PC-9 (cell line): ENCODE measurements at regions of chrX and their contacts with region 1.

Region 1: DNA sequence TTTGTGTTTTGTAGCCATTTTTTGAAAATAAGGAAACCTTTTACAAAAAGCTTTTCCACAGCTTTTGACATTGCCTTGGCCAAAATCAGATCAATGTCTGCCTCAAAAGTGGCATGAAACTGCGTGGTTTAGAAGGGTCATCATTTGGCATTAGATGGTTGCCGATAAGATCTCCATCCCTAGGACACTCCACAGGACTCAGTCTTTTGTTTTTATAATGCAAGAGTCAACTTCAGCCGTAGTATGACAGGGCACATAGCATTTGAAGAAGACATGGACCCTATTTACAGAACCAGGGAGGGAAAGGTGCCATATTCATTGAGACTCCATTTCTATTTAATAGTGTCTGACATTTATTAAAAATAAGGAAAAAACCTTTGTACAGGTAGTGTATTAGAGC is 1.3 kb downstream of the RTL8A start:
- DNase-seq: no peak
- H3K4me3 ChIP-seq: peak overlapping the region; percentile 91; the same call in 1 of the 2 replicates
- H3K27ac ChIP-seq: no peak overlapping the region
- H3K4me1 ChIP-seq: peaks cover 23% of the 10 kb centered on the region
- H3K27me3 ChIP-seq: no peaks in the 10 kb centered on the region
- CTCF ChIP-seq: no peak

Region 2: DNA sequence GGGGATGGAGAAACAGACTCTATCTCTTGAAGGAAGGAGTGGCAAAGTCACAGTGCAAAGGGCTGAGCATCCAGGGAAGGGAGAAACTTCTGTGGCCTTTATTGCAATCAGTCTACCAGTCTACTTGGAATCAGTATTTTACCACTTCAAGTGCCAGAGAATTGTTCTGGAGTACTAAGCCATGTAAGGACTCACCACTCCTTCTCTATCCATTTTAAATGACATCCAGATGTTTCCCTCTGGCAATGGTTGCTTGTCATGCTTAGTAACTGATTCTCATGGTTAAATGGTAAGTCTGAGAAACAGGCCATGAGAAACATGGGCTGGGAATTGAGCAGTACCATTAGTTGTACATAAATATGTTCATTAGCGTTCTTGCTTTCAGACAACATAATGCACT is 80.9 kb before region 1 on chrX:
- CTCF ChIA-PET with region 1: no interaction called
- POLR2A ChIA-PET with region 1: no interaction called
- intact Hi-C with region 1: loop called (anchors 5 kb)
- DNase-seq: no peak
- H3K4me3 ChIP-seq: no peak overlapping the region
- H3K27ac ChIP-seq: no peak overlapping the region
- H3K4me1 ChIP-seq: 0 out of 2 replicates have a peak, but pooled peaks cover 6% of the 10 kb centered on the region
- H3K27me3 ChIP-seq: no peaks in the 10 kb centered on the region
- CTCF ChIP-seq: no peak

Region 3: GRCh38 chrX:135003876-135004623 is 46.6 kb before region 1 on chrX:
- CTCF ChIA-PET with region 1: no interaction called
- POLR2A ChIA-PET with region 1: interaction called, 3 read pairs
- intact Hi-C with region 1: loop called (anchors 2 kb)
- DNase-seq: peak; percentile 84 to 98
- H3K4me3 ChIP-seq: peak overlapping the region; percentile 65
- H3K27ac ChIP-seq: peak overlapping the region; percentile 39
- H3K4me1 ChIP-seq: peaks cover 35% of the 10 kb centered on the region
- H3K27me3 ChIP-seq: no peaks in the 10 kb centered on the region
- CTCF ChIP-seq: no peak

Region 4: DNA sequence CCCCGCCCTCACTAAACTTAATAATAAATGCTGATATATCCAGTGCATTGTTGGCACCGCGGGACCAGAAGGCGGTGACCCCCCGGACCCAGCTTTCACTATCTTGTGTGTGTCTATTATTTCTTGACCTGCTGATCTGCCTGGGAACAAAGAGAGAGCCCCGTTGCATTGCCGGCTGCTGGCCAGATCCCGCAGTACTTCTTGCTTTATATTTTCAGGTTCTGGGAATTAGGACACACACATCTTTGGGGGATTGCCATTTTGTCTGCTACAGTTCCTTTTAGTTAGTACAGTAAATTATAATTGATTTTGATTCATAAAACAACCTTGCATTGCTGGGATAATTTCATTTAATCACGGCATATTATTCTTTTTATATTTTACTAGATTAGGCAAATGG is 26.1 kb before region 1 on chrX:
- CTCF ChIA-PET with region 1: no interaction called
- POLR2A ChIA-PET with region 1: no interaction called
- intact Hi-C with region 1: loop called (anchors 1 kb)
- DNase-seq: no peak
- H3K4me3 ChIP-seq: no peak overlapping the region
- H3K27ac ChIP-seq: no peak overlapping the region
- H3K4me1 ChIP-seq: peaks cover 33% of the 10 kb centered on the region
- H3K27me3 ChIP-seq: no peaks in the 10 kb centered on the region
- CTCF ChIP-seq: no peak

Region 5: GRCh38 chrX:135086197-135086854 is 35.7 kb after region 1 on chrX:
- CTCF ChIA-PET with region 1: no interaction called
- POLR2A ChIA-PET with region 1: no interaction called
- intact Hi-C with region 1: loop called (anchors 5 kb)
- DNase-seq: peak; percentile 39 to 60
- H3K4me3 ChIP-seq: no peak overlapping the region
- H3K27ac ChIP-seq: no peak overlapping the region
- H3K4me1 ChIP-seq: no peaks in the 10 kb centered on the region
- H3K27me3 ChIP-seq: no peaks in the 10 kb centered on the region
- CTCF ChIP-seq: peak; percentile 78